ENCODE measurements at regions of chr22 and their contacts with region 1.

Region 1: GRCh38 chr22:24789516-24789915 is 15.0 kb upstream of the PIWIL3 start:
- DNase-seq: no peak
- ATAC-seq: no peak
- H3K4me3 ChIP-seq: no peak overlapping the region
- H3K27ac ChIP-seq: no peak overlapping the region
- H3K4me1 ChIP-seq: no peaks in the 10 kb centered on the region
- H3K27me3 ChIP-seq: no peaks in the 10 kb centered on the region
- CTCF ChIP-seq: no peak
- POLR2A ChIP-seq: no peak
- RAD21 ChIP-seq: no peak

Region 2: DNA sequence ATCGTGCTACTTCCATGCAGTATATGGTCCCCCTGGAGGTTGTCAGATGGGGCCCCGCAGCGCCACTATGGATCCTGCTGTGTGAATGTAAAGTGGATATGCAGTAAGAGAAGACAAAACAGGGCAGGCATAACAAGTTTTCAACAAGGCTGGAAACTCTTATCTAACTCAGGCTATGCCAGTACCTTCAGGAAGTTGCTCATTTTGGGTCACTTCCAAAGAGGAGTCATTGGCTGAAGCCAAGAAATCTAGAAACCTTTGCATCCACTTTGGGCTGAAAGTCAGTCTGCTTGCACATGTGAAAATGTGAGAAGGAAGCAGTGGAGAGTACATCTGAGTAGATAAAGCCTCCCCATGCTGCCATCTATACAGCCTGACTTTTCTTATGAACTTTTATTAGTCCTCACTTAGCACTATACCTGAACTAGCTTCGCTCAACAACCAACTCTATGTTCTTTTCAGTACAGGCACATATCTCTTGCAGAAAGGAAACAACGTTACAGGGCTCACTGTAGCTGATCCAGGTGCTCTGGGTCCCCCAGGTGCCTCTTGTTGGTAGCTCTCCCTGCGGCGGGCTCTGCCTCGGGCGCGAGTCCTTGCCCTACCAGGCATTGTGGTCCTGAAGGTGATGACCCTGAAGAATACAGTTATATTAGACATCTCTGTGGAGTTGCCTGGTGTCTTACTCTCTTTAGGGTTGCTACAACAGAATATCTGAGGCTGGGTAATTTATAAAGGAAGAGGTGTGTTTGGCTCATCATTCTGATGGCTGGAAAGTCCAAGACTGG is 27.4 kb before region 1 on chr22:
- CTCF ChIA-PET with region 1: no interaction called
- POLR2A ChIA-PET with region 1: no interaction called
- RAD21 ChIA-PET with region 1: no interaction called
- intact Hi-C with region 1: no loop called
- DNase-seq: no peak
- ATAC-seq: no peak
- H3K4me3 ChIP-seq: no peak overlapping the region
- H3K27ac ChIP-seq: no peak overlapping the region
- H3K4me1 ChIP-seq: no peaks in the 10 kb centered on the region
- H3K27me3 ChIP-seq: peaks cover 13% of the 10 kb centered on the region; the same call in 1 of the 2 replicates
- CTCF ChIP-seq: no peak
- POLR2A ChIP-seq: no peak
- RAD21 ChIP-seq: no peak

Region 3: GRCh38 chr22:24803011-24803542 is 13.6 kb after region 1 on chr22:
- CTCF ChIA-PET with region 1: interaction called, 10 read pairs
- POLR2A ChIA-PET with region 1: no interaction called
- RAD21 ChIA-PET with region 1: no interaction called
- intact Hi-C with region 1: no loop called
- DNase-seq: peak; percentile 70
- ATAC-seq: peak; percentile 63
- H3K4me3 ChIP-seq: no peak overlapping the region
- H3K27ac ChIP-seq: no peak overlapping the region
- H3K4me1 ChIP-seq: peaks cover 3 to 16% of the 10 kb centered on the region in 2 experiments; a peak in 3 of 4 replicates
- H3K27me3 ChIP-seq: no peaks in the 10 kb centered on the region
- CTCF ChIP-seq: peak; percentile 90 to 98 (median 94)
- POLR2A ChIP-seq: no peak
- RAD21 ChIP-seq: peak; percentile 36

Region 4: DNA sequence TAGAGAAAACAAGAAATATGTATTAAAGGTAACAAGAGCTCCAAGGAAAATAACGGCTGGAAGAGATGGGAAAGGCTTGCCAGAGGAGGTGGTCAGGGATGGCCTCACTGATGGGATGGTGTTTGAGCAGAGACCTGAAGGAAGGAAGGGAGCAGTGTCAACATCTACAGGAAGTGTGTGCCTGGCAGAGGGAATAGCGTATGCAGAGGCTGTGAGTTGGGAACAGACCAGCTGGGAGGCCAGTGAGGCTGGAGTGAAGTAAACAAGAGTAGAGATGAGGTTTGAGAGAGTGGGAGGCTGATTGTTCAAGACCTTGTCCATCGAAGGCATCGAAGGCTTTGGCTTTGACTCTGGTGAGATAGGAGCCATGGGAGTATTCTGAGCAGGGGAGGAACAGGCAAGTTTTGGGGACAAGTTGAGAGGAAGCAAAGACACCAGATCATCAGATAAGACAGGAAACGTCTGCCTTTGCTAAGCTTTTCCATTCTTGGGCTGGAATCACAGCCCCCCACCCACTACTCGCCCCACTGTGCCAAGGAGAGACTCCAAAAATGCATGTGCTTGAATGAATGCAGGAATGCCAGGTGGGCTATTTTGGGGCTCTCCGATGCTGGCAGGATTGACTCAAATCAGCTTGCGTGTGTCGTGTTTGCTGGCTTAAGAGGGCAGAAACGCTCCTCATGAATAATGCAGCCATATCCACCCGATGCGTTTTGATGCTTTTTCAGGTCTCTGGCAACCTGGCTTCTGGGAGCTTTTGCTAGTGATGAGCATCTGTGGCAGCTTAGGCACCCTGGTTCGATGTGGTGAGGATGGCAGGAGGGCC is 23.6 kb after region 1 on chr22:
- CTCF ChIA-PET with region 1: no interaction called
- POLR2A ChIA-PET with region 1: no interaction called
- RAD21 ChIA-PET with region 1: no interaction called
- intact Hi-C with region 1: no loop called
- DNase-seq: no peak
- ATAC-seq: no peak
- H3K4me3 ChIP-seq: no peak overlapping the region
- H3K27ac ChIP-seq: no peak overlapping the region
- H3K4me1 ChIP-seq: no peaks in the 10 kb centered on the region
- H3K27me3 ChIP-seq: no peaks in the 10 kb centered on the region
- CTCF ChIP-seq: no peak
- POLR2A ChIP-seq: no peak
- RAD21 ChIP-seq: no peak

Region 5: GRCh38 chr22:24926849-24927579 is 137.5 kb after region 1 on chr22:
- CTCF ChIA-PET with region 1: no interaction called
- POLR2A ChIA-PET with region 1: no interaction called
- RAD21 ChIA-PET with region 1: no interaction called
- intact Hi-C with region 1: no loop called
- DNase-seq: no peak
- ATAC-seq: peak; percentile 78
- H3K4me3 ChIP-seq: no peak overlapping the region
- H3K27ac ChIP-seq: no peak overlapping the region
- H3K4me1 ChIP-seq: peaks cover 7 to 11% of the 10 kb centered on the region in 2 experiments
- H3K27me3 ChIP-seq: peaks cover 17% of the 10 kb centered on the region
- CTCF ChIP-seq: no peak
- POLR2A ChIP-seq: no peak
- RAD21 ChIP-seq: no peak